ENCODE measurements at regions of chr2 and their contacts with region 1.

Region 1: GRCh38 chr2:201451292-201452057 is at the starts of genes STRADB and TRAK2:
- DNase-seq: peak; percentile 98
- H3K4me3 ChIP-seq: peak within 1 kb of the TSS; percentile 86
- H3K4me3 Mint-ChIP-seq: peak within 1 kb of the TSS; percentile 94
- H3K27ac Mint-ChIP-seq: peak within 1 kb of the TSS; percentile 94
- H3K4me1 ChIP-seq: peaks cover 23% of the 10 kb centered on the region
- H3K4me1 Mint-ChIP-seq: peaks cover 15% of the 10 kb centered on the region
- H3K27me3 ChIP-seq: no peaks in the 10 kb centered on the region
- H3K27me3 Mint-ChIP-seq: no peaks in the 10 kb centered on the region
- CTCF ChIP-seq: peak in 1 of 2 experiments; percentile 13
- total RNA-seq, gene STRADB: 41.2 and 49.0 TPM in 2 replicates
- total RNA-seq, gene TRAK2: 21.9 and 23.2 TPM in 2 replicates

Region 2: GRCh38 chr2:200888704-200889625 is 562.5 kb before region 1 on chr2 and contains the starts of genes NIF3L1 and PPIL3:
- CTCF ChIA-PET with region 1: no interaction called
- POLR2A ChIA-PET with region 1: interaction called, 10 read pairs
- intact Hi-C with region 1: no loop called
- DNase-seq: peak; percentile 98 to 99
- H3K4me3 ChIP-seq: peak within 1 kb of the TSS; percentile 56
- H3K4me3 Mint-ChIP-seq: peak within 1 kb of the TSS; percentile 89
- H3K27ac Mint-ChIP-seq: peak within 1 kb of the TSS; percentile 97
- H3K4me1 ChIP-seq: 0 out of 2 replicates have a peak, but pooled peaks cover 3% of the 10 kb centered on the region
- H3K4me1 Mint-ChIP-seq: peaks cover 19% of the 10 kb centered on the region
- H3K27me3 ChIP-seq: no peaks in the 10 kb centered on the region
- H3K27me3 Mint-ChIP-seq: no peaks in the 10 kb centered on the region
- CTCF ChIP-seq: no peak
- total RNA-seq, gene NIF3L1: 40.7 and 49.7 TPM in 2 replicates
- total RNA-seq, gene PPIL3: 17.6 and 25.0 TPM in 2 replicates

Region 3: GRCh38 chr2:201182650-201183364 is 268.7 kb before region 1 on chr2 and contains the start of gene CASP10:
- CTCF ChIA-PET with region 1: interaction called, 11 read pairs
- POLR2A ChIA-PET with region 1: no interaction called
- intact Hi-C with region 1: no loop called
- DNase-seq: peak; percentile 49 to 75
- H3K4me3 ChIP-seq: peak within 1 kb of the TSS; percentile 55
- H3K4me3 Mint-ChIP-seq: peak within 1 kb of the TSS; percentile 81
- H3K27ac Mint-ChIP-seq: peak within 1 kb of the TSS; percentile 92
- H3K4me1 ChIP-seq: peaks cover 4% of the 10 kb centered on the region; the same call in 1 of the 2 replicates
- H3K4me1 Mint-ChIP-seq: peaks cover 13% of the 10 kb centered on the region
- H3K27me3 ChIP-seq: no peaks in the 10 kb centered on the region
- H3K27me3 Mint-ChIP-seq: no peaks in the 10 kb centered on the region
- CTCF ChIP-seq: peak in 1 of 2 experiments; percentile 72
- total RNA-seq, gene CASP10: 5.8 and 5.9 TPM in 2 replicates

Region 4: DNA sequence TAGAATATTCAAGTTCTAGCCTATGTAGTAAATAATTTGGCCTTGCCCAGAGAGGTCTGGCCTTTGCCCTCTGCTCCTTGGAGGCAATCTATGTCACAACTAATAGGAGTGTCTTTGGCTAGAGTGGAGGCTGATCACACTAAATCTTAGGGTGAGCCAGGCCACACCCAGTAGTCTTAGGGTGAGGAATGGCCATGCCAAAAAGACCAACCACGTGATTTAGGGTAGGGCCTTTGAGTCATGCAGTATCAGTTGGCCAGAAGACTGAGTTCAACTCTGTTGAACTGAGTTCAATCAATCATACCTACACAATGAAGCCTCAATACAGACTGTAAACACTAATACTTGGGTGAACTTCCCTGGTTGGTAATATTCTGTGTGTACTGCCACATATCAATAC is 68.3 kb before region 1 on chr2:
- CTCF ChIA-PET with region 1: no interaction called
- POLR2A ChIA-PET with region 1: no interaction called
- intact Hi-C with region 1: no loop called
- DNase-seq: no peak
- H3K4me3 ChIP-seq: no peak overlapping the region
- H3K4me3 Mint-ChIP-seq: no peak overlapping the region
- H3K27ac Mint-ChIP-seq: no peak overlapping the region
- H3K4me1 ChIP-seq: no peaks in the 10 kb centered on the region
- H3K4me1 Mint-ChIP-seq: no peaks in the 10 kb centered on the region
- H3K27me3 ChIP-seq: no peaks in the 10 kb centered on the region
- H3K27me3 Mint-ChIP-seq: no peaks in the 10 kb centered on the region
- CTCF ChIP-seq: no peak

Region 5: DNA sequence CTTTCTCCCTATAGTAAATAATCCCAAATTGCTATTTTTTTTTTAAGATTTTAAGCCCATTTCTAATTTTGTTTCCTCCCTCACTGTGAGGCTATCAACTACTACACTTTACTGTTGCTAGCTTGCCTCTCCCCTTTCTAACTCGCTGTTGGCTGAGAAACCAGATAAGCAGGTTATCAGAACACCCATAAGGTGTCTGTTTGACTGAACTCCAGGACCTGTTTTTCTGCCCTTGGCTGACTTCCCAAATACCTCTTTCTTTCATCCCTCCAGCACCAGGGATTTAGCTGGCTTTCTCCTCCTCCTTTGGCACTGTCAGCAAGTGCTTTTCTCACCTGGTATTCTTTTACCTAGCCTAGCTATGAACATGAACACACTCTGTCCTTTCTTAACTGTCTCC is 11.3 kb before region 1 on chr2:
- CTCF ChIA-PET with region 1: no interaction called
- POLR2A ChIA-PET with region 1: no interaction called
- intact Hi-C with region 1: loop called (anchors 1 kb)
- DNase-seq: peak; percentile 79
- H3K4me3 ChIP-seq: no peak overlapping the region
- H3K4me3 Mint-ChIP-seq: peak overlapping the region; percentile 56
- H3K27ac Mint-ChIP-seq: peak overlapping the region; percentile 68
- H3K4me1 ChIP-seq: peaks cover 20% of the 10 kb centered on the region
- H3K4me1 Mint-ChIP-seq: peaks cover 16% of the 10 kb centered on the region
- H3K27me3 ChIP-seq: no peaks in the 10 kb centered on the region
- H3K27me3 Mint-ChIP-seq: no peaks in the 10 kb centered on the region
- CTCF ChIP-seq: no peak

Region 6: GRCh38 chr2:201466050-201466675 is 14.7 kb after region 1 on chr2:
- CTCF ChIA-PET with region 1: interaction called, 11 read pairs
- POLR2A ChIA-PET with region 1: no interaction called
- intact Hi-C with region 1: no loop called
- DNase-seq: no peak
- H3K4me3 ChIP-seq: no peak overlapping the region
- H3K4me3 Mint-ChIP-seq: no peak overlapping the region
- H3K27ac Mint-ChIP-seq: no peak overlapping the region
- H3K4me1 ChIP-seq: no peaks in the 10 kb centered on the region
- H3K4me1 Mint-ChIP-seq: peaks cover 7% of the 10 kb centered on the region
- H3K27me3 ChIP-seq: no peaks in the 10 kb centered on the region
- H3K27me3 Mint-ChIP-seq: no peaks in the 10 kb centered on the region
- CTCF ChIP-seq: no peak

Region 7: GRCh38 chr2:201642579-201643215 is 191.2 kb after region 1 on chr2:
- CTCF ChIA-PET with region 1: interaction called, 4 read pairs
- POLR2A ChIA-PET with region 1: interaction called, 5 read pairs
- intact Hi-C with region 1: loop called (anchors 2 kb)
- DNase-seq: peak; percentile 85 to 94
- H3K4me3 ChIP-seq: peak overlapping the region; percentile 64
- H3K4me3 Mint-ChIP-seq: peak overlapping the region; percentile 92
- H3K27ac Mint-ChIP-seq: peak overlapping the region; percentile 97
- H3K4me1 ChIP-seq: no peaks in the 10 kb centered on the region
- H3K4me1 Mint-ChIP-seq: peaks cover 18% of the 10 kb centered on the region
- H3K27me3 ChIP-seq: no peaks in the 10 kb centered on the region
- H3K27me3 Mint-ChIP-seq: no peaks in the 10 kb centered on the region
- CTCF ChIP-seq: no peak

Region 8: DNA sequence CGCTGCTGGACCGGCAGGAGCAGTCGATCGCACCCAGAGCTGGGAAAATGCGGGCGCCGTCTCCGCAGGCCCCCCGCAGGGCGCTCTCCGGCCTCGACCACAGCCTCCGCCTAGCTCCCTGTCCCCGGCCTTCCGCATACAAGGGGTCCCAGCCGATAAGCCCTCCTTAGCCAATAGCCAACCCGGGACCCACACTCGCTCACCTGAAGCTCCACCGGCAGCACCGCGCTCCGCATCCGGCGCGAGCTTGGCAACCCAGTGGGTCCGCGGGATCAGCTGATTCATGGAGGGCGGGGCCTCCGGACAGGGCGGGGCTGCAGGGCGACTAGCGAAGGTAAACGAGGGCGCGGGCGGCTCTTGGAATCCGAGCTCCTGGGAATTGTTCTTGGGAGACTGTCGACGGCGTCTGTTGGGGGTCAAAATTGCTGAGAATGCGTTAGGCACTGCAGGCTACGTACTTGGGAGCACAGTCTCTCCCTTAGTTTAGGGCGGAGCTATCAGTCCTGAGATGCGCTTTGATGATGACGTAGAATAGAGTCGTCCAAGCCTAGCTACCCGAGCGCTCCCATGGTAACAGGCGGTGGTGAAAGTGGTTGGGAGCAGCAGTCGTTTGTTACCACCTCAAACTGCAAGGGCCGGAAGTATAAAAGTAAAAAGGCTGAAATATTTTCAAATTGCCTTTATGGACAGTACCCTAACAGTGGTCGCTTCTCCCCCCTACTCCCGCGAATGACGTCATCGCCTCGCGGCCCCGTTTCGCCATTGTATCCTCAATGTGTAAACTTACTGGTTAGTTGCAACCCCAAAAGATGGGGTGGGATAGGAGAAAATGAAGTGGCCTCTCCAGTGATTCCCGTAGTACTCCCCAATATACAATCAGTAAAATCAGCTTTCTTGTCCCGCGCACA is 329.5 kb after region 1 on chr2 and contains the start of gene ALS2:
- CTCF ChIA-PET with region 1: no interaction called
- POLR2A ChIA-PET with region 1: interaction called, 12 read pairs
- intact Hi-C with region 1: no loop called
- DNase-seq: peak; percentile 97 to 98
- H3K4me3 ChIP-seq: peak within 1 kb of the TSS; percentile 97
- H3K4me3 Mint-ChIP-seq: peak within 1 kb of the TSS; percentile 85
- H3K27ac Mint-ChIP-seq: peak within 1 kb of the TSS; percentile 85
- H3K4me1 ChIP-seq: peaks cover 21% of the 10 kb centered on the region
- H3K4me1 Mint-ChIP-seq: peaks cover 11% of the 10 kb centered on the region
- H3K27me3 ChIP-seq: no peaks in the 10 kb centered on the region
- H3K27me3 Mint-ChIP-seq: no peaks in the 10 kb centered on the region
- CTCF ChIP-seq: no peak
- total RNA-seq, gene ALS2: 34.2 and 38.3 TPM in 2 replicates

Measured in Caco-2 (cell line).